ENCODE measurements at regions of chr12 and their contacts with region 1.

Region 1: GRCh38 chr12:67681105-67681778 is 32.7 kb downstream of the DYRK2 start:
- DNase-seq: no peak
- H3K4me3 ChIP-seq: no peak overlapping the region
- H3K27ac ChIP-seq: peak overlapping the region; percentile 71 to 89 (median 82)
- H3K4me1 ChIP-seq: peaks cover 0 to 40% (median 22%) of the 10 kb centered on the region in 4 donors
- H3K27me3 ChIP-seq: no peaks in the 10 kb centered on the region
- CTCF ChIP-seq: no peak
- EP300 ChIP-seq: peak in 1 of 4 donors; percentile 62
- POLR2A ChIP-seq: no peak

Region 2: DNA sequence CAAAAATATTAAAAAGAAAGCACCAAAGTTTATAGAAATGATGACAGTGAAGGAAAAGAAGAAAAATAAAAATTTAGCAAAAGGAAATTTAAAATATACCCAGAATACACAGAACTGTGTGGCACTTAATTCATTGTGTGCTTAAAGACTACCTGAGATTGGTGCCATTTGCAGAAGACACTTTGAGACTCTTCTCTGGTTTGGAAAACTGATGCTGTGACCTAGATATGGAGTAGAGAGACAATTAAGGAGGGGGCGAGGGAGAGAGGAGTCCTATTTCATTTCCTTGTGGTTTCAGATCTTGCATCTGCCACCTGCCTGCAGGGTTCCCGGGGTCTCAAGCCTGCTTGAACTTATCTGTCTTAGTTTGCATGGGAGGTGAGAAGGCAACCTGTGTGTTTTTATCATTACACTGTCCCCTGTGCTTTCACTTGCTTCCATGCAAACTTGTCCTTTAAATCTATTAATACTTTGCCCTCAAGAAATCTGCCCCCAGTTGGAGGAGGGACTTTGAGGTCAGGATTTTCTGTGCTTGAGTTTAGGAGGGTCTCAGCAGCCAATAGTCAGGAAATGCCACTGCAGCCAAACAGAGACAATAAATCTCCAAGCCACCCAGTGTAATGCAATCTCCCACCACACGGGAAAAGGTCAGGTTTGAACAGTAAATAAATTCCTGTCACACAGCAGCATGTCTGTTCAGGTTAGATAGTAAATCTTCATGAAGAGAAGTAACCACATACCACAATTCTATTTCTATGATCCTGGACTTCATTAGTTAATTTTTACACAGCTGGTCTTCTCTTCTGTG is 292.7 kb before region 1 on chr12:
- intact Hi-C with region 1: no loop called
- DNase-seq: no peak
- H3K4me3 ChIP-seq: no peak overlapping the region
- H3K27ac ChIP-seq: no peak overlapping the region
- H3K4me1 ChIP-seq: no peaks in the 10 kb centered on the region
- H3K27me3 ChIP-seq: no peaks in the 10 kb centered on the region
- CTCF ChIP-seq: no peak
- EP300 ChIP-seq: no peak
- POLR2A ChIP-seq: no peak

Region 3: GRCh38 chr12:67827820-67828383 is 146.7 kb after region 1 on chr12:
- intact Hi-C with region 1: loop called (anchors 5 kb)
- DNase-seq: peak; percentile 73
- H3K4me3 ChIP-seq: peak overlapping the region; percentile 33 to 42 (median 37)
- H3K27ac ChIP-seq: peak overlapping the region; percentile 83 to 91 (median 89)
- H3K4me1 ChIP-seq: peaks cover 0 to 26% (median 16%) of the 10 kb centered on the region in 4 donors
- H3K27me3 ChIP-seq: no peaks in the 10 kb centered on the region
- CTCF ChIP-seq: no peak
- EP300 ChIP-seq: no peak
- POLR2A ChIP-seq: no peak